Endothelial cell of umbilical vein (primary cell): ENCODE measurements at regions of chr17 and their contacts with region 1.

Region 1: GRCh38 chr17:7745748-7746470 is 28.4 kb downstream of the DNAH2 start:
- DNase-seq: peak; percentile 98
- H3K4me3 ChIP-seq: no peak overlapping the region
- H3K27ac ChIP-seq: peak overlapping the region; percentile 58
- H3K4me1 ChIP-seq: peaks cover 17% of the 10 kb centered on the region
- H3K27me3 ChIP-seq: peaks cover 0 to under 1% of the 10 kb centered on the region in 2 experiments
- CTCF ChIP-seq: peak in 1 of 2 donors; percentile 18
- POLR2A ChIP-seq: no peak

Region 2: GRCh38 chr17:7782237-7782636 is 36.3 kb after region 1 on chr17:
- CTCF ChIA-PET with region 1: interaction called, 236 read pairs
- POLR2A ChIA-PET with region 1: no interaction called
- dilution Hi-C with region 1: no loop called
- intact Hi-C with region 1: loop called (anchors 1 kb)
- DNase-seq: peak; percentile 16
- H3K4me3 ChIP-seq: no peak overlapping the region
- H3K27ac ChIP-seq: no peak overlapping the region
- H3K4me1 ChIP-seq: no peaks in the 10 kb centered on the region
- H3K27me3 ChIP-seq: peaks cover 7 to 12% of the 10 kb centered on the region in 2 experiments
- CTCF ChIP-seq: no peak
- POLR2A ChIP-seq: no peak

Region 3: DNA sequence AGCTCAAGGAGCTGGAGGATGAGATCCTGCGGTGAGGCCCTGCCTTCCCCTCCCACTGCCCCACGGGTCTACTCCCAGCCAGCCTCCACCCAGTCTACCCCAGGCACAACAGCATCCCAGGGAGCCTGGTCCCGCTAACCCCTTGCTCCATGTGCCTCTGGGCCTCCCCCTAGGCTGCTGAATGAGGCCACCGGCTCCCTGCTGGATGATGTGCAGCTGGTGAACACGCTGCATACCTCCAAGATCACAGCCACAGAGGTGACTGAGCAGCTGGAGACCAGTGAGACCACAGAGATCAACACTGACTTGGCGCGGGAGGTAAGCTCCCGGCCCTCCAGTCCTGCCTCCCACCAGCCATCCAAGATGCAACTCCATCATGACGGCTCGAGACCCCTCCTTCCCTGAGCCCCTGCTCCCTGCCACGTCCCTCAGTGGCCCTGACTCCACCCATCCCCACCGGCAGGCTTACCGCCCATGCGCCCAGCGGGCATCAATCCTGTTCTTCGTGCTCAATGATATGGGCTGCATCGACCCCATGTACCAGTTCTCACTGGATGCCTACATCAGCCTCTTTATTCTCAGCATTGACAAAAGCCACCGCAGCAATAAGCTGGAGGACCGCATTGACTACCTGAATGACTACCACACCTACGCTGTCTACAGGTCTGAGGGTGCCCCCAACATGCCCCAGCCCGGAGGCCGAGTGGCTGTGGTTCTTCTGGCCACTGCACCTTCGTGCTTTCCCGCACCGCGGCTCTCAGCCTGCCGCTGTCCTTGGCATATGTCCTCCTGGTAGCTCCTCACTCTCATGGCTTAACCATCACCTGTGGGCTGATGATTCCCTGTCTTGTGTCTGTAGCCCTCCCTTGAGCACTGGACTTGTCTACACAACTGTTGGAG is 73.1 kb after region 1 on chr17:
- CTCF ChIA-PET with region 1: interaction called, 16 read pairs
- POLR2A ChIA-PET with region 1: no interaction called
- dilution Hi-C with region 1: no loop called
- intact Hi-C with region 1: loop called (anchors 5 kb)
- DNase-seq: no peak
- H3K4me3 ChIP-seq: no peak overlapping the region
- H3K27ac ChIP-seq: no peak overlapping the region
- H3K4me1 ChIP-seq: no peaks in the 10 kb centered on the region
- H3K27me3 ChIP-seq: peaks cover 9 to 13% of the 10 kb centered on the region in 2 experiments
- CTCF ChIP-seq: no peak
- POLR2A ChIP-seq: no peak

Region 4: DNA sequence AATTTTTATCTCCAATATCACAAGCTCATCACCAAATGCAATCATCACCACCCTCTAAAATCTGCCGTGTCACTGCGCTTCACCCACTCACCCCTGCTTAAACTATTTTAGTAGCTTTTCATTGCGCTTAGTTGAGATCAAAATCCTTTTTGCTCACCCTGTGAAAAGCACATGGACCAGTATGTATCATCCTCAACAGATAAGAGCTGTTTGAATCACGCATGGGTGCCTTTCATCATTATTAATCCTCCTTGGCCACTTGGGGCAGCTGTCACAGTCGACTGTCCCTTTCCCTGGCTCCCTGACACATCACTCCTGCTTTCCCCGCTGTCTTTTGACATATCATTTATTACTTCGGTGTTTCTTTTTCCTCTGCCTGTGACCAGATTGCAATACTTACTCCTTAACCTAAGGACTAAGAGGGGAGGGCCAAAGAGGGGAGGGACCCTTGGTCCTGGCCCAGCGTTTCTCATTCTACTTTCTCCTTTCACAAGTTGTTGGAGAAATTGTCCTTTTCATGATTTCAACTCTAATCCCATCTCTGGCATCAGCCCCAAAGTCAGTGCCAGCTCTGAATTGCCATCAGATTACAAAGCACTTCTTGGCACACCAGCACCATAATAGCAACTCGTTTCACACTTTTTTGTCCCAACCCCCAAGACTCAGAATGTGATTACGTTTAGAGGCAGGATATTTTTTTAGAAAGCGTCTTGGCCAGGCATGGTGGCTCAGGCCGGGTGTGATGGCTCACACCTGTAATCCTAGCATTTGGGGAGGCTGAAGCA is 79.5 kb after region 1 on chr17:
- CTCF ChIA-PET with region 1: interaction called, 16 read pairs
- POLR2A ChIA-PET with region 1: no interaction called
- dilution Hi-C with region 1: no loop called
- intact Hi-C with region 1: loop called (anchors 5 kb)
- DNase-seq: no peak
- H3K4me3 ChIP-seq: no peak overlapping the region
- H3K27ac ChIP-seq: no peak overlapping the region
- H3K4me1 ChIP-seq: no peaks in the 10 kb centered on the region
- H3K27me3 ChIP-seq: peaks cover 0 to 6% of the 10 kb centered on the region in 2 experiments
- CTCF ChIP-seq: peak in 1 of 2 donors; percentile 4
- POLR2A ChIP-seq: no peak

Region 5: GRCh38 chr17:7982666-7983065 is 236.8 kb after region 1 on chr17:
- CTCF ChIA-PET with region 1: interaction called, 11 read pairs
- POLR2A ChIA-PET with region 1: no interaction called
- dilution Hi-C with region 1: no loop called
- intact Hi-C with region 1: no loop called
- DNase-seq: peak; percentile 33
- H3K4me3 ChIP-seq: no peak overlapping the region
- H3K27ac ChIP-seq: no peak overlapping the region
- H3K4me1 ChIP-seq: peaks cover 4% of the 10 kb centered on the region
- H3K27me3 ChIP-seq: no peaks in the 10 kb centered on the region
- CTCF ChIP-seq: peak in 1 of 2 donors; percentile 8
- POLR2A ChIP-seq: no peak